ENCODE measurements at regions of chr16 and their contacts with region 1.

Region 1: DNA sequence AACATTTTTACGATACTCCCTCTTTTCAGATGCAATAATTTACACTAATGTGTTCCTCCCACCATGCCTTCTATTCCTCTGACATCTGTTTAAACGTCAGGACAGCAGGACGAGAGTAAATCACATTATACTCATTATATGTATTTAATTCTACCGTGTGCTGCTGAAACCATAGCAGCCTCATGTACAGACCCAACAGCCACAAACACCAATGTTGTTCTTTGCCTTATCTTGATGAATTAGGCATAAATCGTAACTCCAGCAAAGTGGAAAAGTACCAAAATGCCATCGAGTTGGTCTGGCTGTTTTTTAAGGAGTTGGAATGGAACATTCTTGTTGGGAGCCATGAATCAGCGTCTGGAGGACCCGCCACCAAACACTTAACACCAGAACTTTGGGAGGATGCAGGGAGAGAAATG is 82.9 kb upstream of the FOXF1 start:
- DNase-seq: no peak
- H3K4me3 Mint-ChIP-seq: no peak overlapping the region
- H3K27ac Mint-ChIP-seq: no peak overlapping the region
- H3K4me1 Mint-ChIP-seq: no peaks in the 10 kb centered on the region
- H3K27me3 Mint-ChIP-seq: no peaks in the 10 kb centered on the region

Region 2: GRCh38 chr16:86452451-86452850 is 25.0 kb after region 1 on chr16:
- CTCF ChIA-PET with region 1: no interaction called
- intact Hi-C with region 1: loop called (anchors 1 kb)
- DNase-seq: no peak
- H3K4me3 Mint-ChIP-seq: no peak overlapping the region
- H3K27ac Mint-ChIP-seq: no peak overlapping the region
- H3K4me1 Mint-ChIP-seq: peaks cover 12% of the 10 kb centered on the region
- H3K27me3 Mint-ChIP-seq: peaks cover 10% of the 10 kb centered on the region